AG04450 (cell line): ENCODE measurements at regions of chr22 and their contacts with region 1.

Region 1: DNA sequence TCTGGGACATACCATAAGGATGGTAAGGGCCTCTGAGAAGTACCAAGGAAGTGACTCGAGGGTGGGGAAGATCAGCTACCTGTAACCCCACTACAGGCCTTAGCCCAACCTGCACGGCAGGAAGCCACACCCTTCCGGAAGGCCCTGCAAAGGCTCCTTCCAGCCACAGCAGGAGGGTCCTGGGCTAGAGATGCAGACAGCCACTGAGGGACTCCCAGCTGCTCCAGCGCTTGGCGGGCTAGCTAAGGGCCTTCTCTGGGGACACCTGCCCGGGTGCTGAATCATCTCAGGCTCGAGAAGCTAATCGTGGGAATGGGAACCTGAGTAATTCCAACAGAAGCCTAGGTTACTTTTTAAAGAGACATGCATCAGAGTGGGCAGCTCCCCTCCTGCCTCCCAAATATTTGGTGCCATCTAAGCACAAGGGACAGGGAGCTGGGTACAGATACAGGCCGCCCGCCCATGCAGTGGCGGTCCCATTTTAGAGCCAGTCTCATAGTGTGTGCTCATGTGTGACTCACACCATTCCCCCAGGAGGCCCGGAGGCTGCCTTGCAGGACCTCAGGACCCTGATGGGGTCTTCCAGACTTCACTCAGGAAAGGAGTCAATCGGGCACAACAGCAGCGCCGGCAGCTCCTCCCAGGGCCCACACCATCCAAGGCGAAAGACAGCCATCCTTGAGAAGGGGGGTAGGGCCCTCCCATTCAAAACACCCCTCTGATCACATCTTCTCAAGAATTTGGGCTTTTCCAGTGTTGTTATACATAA is 8.0 kb downstream of the MYH9 start:
- DNase-seq: no peak
- H3K4me3 ChIP-seq: peak overlapping the region; percentile 10
- H3K27ac ChIP-seq: peak overlapping the region; percentile 77
- H3K27me3 ChIP-seq: no peaks in the 10 kb centered on the region
- CTCF ChIP-seq: no peak

Region 2: DNA sequence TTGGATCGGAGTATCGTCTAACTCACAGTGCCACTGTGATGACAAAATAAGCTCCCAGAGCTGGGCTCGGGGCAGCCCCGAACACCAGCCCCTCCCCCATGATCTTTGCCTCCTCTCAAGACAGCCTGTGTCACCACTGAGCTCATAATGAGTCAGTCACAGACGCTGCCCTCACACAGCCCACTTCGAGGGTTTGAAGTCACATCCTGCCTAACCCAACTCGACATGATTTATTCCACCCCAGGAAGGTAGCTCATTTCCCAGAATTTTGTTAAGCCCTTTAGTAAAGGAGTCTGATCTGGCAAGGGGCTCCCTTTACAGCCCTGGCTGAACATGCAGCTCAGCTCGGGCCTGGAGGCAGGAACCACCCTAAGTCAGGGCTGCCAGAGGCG is 14.8 kb before region 1 on chr22:
- CTCF ChIA-PET with region 1: no interaction called
- POLR2A ChIA-PET with region 1: interaction called, 30 read pairs
- DNase-seq: peak; percentile 74
- H3K4me3 ChIP-seq: no peak overlapping the region
- H3K27ac ChIP-seq: peak overlapping the region; percentile 87
- H3K27me3 ChIP-seq: no peaks in the 10 kb centered on the region
- CTCF ChIP-seq: no peak